ENCODE measurements at regions of chr2 and their contacts with region 1.

Region 1: DNA sequence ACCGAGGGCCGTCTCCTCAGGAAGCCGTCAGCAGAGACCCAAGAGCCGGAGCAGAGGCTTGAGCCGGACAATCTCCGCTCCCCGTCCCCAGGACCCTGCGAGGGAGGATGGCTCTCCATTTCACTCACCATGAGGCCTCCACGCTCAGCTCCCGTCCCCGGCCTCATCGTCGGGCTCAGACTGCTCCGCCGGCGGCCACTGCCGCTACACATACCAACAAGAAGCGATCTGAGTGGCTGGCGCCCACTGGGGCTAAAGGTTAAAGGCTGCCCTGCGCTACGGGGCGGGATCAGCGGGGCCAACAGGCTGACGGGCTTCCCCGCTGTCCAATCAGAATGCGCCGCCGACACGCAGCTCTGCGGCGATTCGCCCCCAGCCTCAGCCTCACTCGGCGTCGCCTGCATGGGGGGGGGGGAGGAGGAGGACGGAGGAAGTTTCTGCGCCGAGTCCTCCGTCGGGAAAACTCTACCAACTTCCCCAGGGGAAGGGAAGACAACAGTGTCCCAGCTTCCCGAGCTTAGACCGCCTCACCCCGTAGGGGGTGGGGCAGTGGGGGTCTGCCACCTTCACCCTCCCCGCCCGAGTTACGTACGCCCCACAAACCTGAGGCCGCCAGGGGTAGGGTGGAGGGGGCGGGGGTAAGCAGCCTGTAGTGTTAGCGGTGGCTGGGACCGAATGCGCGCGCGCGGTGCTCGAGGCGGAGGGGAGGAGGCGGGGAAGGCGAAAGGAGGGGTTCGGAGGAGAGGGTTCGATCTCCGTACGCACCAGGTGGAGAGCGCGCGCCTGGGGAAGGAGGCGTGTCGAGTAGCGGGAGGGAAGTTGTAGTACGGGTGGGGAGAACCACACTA is at the start of gene PRPF40A:
- DNase-seq: peak; percentile 97 to 99 (median 98)
- ATAC-seq: peak; percentile 83
- H3K4me3 ChIP-seq: peak within 1 kb of the TSS; percentile 98
- H3K4me3 Mint-ChIP-seq: peak within 1 kb of the TSS; percentile 97 to 100 (median 99)
- H3K27ac ChIP-seq: peak within 1 kb of the TSS; percentile 93
- H3K27ac Mint-ChIP-seq: peak within 1 kb of the TSS; percentile 97 to 100 (median 99)
- H3K4me1 ChIP-seq: peaks cover 21 to 35% of the 10 kb centered on the region in 2 donors
- H3K4me1 Mint-ChIP-seq: peaks cover 47 to 84% (median 73%) of the 10 kb centered on the region in 7 donors
- H3K27me3 ChIP-seq: no peaks in the 10 kb centered on the region
- H3K27me3 Mint-ChIP-seq: no peaks in the 10 kb centered on the region
- total RNA-seq, gene PRPF40A: 104 to 126 (median 109) TPM

Region 2: GRCh38 chr2:151289369-151290088 is 1427.9 kb before region 1 on chr2 and contains the start of gene NMI:
- CTCF ChIA-PET with region 1: no interaction called
- POLR2A ChIA-PET with region 1: interaction called, 4 read pairs
- intact Hi-C with region 1: loop called (anchors 1 kb)
- DNase-seq: peak; percentile 47 to 84 (median 80)
- ATAC-seq: peak; percentile 79
- H3K4me3 ChIP-seq: peak within 1 kb of the TSS; percentile 76
- H3K4me3 Mint-ChIP-seq: peak within 1 kb of the TSS; percentile 85 to 99 (median 95)
- H3K27ac ChIP-seq: peak within 1 kb of the TSS; percentile 92
- H3K27ac Mint-ChIP-seq: peak within 1 kb of the TSS; percentile 94 to 100 (median 97)
- H3K4me1 ChIP-seq: peaks cover 18 to 22% of the 10 kb centered on the region in 2 donors
- H3K4me1 Mint-ChIP-seq: peaks cover 33 to 66% (median 48%) of the 10 kb centered on the region in 7 donors
- H3K27me3 ChIP-seq: no peaks in the 10 kb centered on the region
- H3K27me3 Mint-ChIP-seq: no peaks in the 10 kb centered on the region
- total RNA-seq, gene NMI: 14.9 to 69.9 (median 29.3) TPM

Region 3: GRCh38 chr2:151638191-151638933 is 1079.1 kb before region 1 on chr2:
- CTCF ChIA-PET with region 1: no interaction called
- POLR2A ChIA-PET with region 1: no interaction called
- intact Hi-C with region 1: loop called (anchors 1 to 5 kb)
- DNase-seq: peak in 8 of 9 donors; percentile 23 to 66 (median 52)
- ATAC-seq: peak; percentile 59
- H3K4me3 ChIP-seq: peak overlapping the region; percentile 42
- H3K4me3 Mint-ChIP-seq: peak overlapping the region; percentile 18 to 89 (median 84)
- H3K27ac ChIP-seq: peak overlapping the region; percentile 69
- H3K27ac Mint-ChIP-seq: peak overlapping the region; percentile 90 to 97 (median 94)
- H3K4me1 ChIP-seq: peaks cover 33 to 40% of the 10 kb centered on the region in 2 donors
- H3K4me1 Mint-ChIP-seq: peaks cover 32 to 57% (median 38%) of the 10 kb centered on the region in 7 donors
- H3K27me3 ChIP-seq: no peaks in the 10 kb centered on the region
- H3K27me3 Mint-ChIP-seq: no peaks in the 10 kb centered on the region

Region 4: GRCh38 chr2:152025678-152026287 is 691.7 kb before region 1 on chr2:
- CTCF ChIA-PET with region 1: no interaction called
- POLR2A ChIA-PET with region 1: no interaction called
- intact Hi-C with region 1: loop called in 1 of 2 experiments (anchors 1 kb)
- DNase-seq: peak; percentile 50 to 81 (median 76)
- ATAC-seq: peak; percentile 94
- H3K4me3 ChIP-seq: peak overlapping the region; percentile 54
- H3K4me3 Mint-ChIP-seq: peak overlapping the region; percentile 3 to 95 (median 82)
- H3K27ac ChIP-seq: no peak overlapping the region
- H3K27ac Mint-ChIP-seq: peak overlapping the region in 4 of 9 donors; percentile 13 to 58 (median 24)
- H3K4me1 ChIP-seq: no peaks in the 10 kb centered on the region
- H3K4me1 Mint-ChIP-seq: peaks cover 0 to 12% (median 10%) of the 10 kb centered on the region in 7 donors
- H3K27me3 ChIP-seq: no peaks in the 10 kb centered on the region
- H3K27me3 Mint-ChIP-seq: peaks cover 0 to 14% (median 0%) of the 10 kb centered on the region in 5 donors

Region 5: DNA sequence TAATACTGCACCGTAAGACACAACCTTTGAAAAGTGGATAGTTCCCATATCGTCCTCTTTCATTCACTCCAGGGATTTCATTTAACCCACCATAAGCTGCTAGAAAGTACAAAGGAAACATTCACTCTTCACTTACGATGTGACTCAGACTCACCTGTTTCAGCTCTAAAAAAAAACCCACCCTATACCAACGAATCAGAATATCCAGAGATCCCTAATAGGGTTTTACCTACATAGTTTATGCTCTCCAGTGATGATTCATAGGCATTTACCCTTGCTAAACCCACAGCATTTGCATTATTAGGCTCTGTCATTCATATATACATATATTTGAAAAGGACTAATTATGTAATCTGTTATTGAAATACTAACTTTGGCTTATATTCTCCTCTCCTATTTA is 60.4 kb before region 1 on chr2:
- CTCF ChIA-PET with region 1: no interaction called
- POLR2A ChIA-PET with region 1: no interaction called
- intact Hi-C with region 1: loop called in 1 of 2 experiments (anchors 10 kb)
- DNase-seq: no peak
- ATAC-seq: no peak
- H3K4me3 ChIP-seq: no peak overlapping the region
- H3K4me3 Mint-ChIP-seq: no peak overlapping the region
- H3K27ac ChIP-seq: no peak overlapping the region
- H3K27ac Mint-ChIP-seq: peak overlapping the region in 5 of 9 donors; percentile 10 to 70 (median 19)
- H3K4me1 ChIP-seq: no peaks in the 10 kb centered on the region
- H3K4me1 Mint-ChIP-seq: peaks cover 0 to 4% (median 0%) of the 10 kb centered on the region in 7 donors
- H3K27me3 ChIP-seq: no peaks in the 10 kb centered on the region
- H3K27me3 Mint-ChIP-seq: no peaks in the 10 kb centered on the region

Region 6: GRCh38 chr2:152730591-152731303 is 13.3 kb after region 1 on chr2:
- CTCF ChIA-PET with region 1: interaction called, 3 read pairs
- POLR2A ChIA-PET with region 1: interaction called, 7 read pairs
- intact Hi-C with region 1: loop called in 1 of 2 experiments (anchors 1 kb)
- DNase-seq: peak in 6 of 9 donors; percentile 15 to 47 (median 40)
- ATAC-seq: peak; percentile 96
- H3K4me3 ChIP-seq: no peak overlapping the region
- H3K4me3 Mint-ChIP-seq: peak overlapping the region in 6 of 10 donors; percentile 4 to 15 (median 10)
- H3K27ac ChIP-seq: no peak overlapping the region
- H3K27ac Mint-ChIP-seq: peak overlapping the region in 3 of 9 donors; percentile 1 to 33 (median 17)
- H3K4me1 ChIP-seq: peaks cover 17 to 21% of the 10 kb centered on the region in 2 donors
- H3K4me1 Mint-ChIP-seq: peaks cover 20 to 35% (median 25%) of the 10 kb centered on the region in 7 donors
- H3K27me3 ChIP-seq: no peaks in the 10 kb centered on the region
- H3K27me3 Mint-ChIP-seq: no peaks in the 10 kb centered on the region

Region 7: GRCh38 chr2:153487448-153487847 is 770.0 kb after region 1 on chr2:
- CTCF ChIA-PET with region 1: no interaction called
- POLR2A ChIA-PET with region 1: no interaction called
- intact Hi-C with region 1: no loop called
- DNase-seq: no peak
- ATAC-seq: no peak
- H3K4me3 ChIP-seq: no peak overlapping the region
- H3K4me3 Mint-ChIP-seq: no peak overlapping the region
- H3K27ac ChIP-seq: no peak overlapping the region
- H3K27ac Mint-ChIP-seq: no peak overlapping the region
- H3K4me1 ChIP-seq: no peaks in the 10 kb centered on the region
- H3K4me1 Mint-ChIP-seq: no peaks in the 10 kb centered on the region
- H3K27me3 ChIP-seq: no peaks in the 10 kb centered on the region
- H3K27me3 Mint-ChIP-seq: peaks cover 5 to 33% (median 26%) of the 10 kb centered on the region in 5 donors